ENCODE measurements at regions of chr9 and their contacts with region 1.

Region 1: DNA sequence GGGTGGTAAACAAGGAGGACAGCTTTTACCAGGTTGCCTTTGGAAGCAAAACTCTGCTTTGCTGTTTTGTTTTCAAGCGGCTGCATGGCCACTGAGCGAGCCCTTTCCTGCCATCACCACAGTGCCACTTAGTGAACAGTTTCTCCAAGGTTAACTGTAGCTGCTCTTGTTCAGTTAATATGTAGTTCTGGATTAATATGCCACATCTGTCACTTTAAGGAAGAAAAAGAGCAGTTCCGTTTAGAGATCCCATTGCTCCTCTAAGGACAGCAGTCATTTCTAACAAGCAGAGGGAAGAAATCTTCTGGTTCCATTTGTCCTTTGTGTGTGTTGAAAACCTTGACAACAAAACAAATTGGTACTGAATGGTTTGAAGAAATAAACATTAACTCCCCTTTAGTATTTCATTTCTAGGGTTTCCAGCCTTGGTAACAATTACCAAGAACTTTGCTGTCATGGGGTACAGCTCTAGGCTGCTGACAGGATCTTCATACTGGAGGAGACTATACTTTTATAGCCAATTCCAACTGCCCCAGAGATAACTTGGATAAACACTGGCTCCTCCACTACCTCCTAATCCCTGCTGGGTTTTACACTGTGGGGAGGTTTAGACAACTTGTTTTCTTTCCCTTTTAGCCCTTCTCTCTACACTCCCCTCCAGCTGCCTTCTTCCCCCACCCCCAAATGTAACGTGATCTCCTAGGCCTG is 10.3 kb upstream of the ABL1 start:
- DNase-seq: peak in 1 of 7 donors; percentile 34
- H3K4me3 ChIP-seq: no peak overlapping the region
- H3K27ac ChIP-seq: peak overlapping the region in 2 of 5 donors; percentile 55 to 57
- H3K4me1 ChIP-seq: peaks cover 18 to 23% of the 10 kb centered on the region in 2 donors
- H3K27me3 ChIP-seq: no peaks in the 10 kb centered on the region
- CTCF ChIP-seq: no peak
- POLR2A ChIP-seq: no peak

Region 2: GRCh38 chr9:130794923-130795495 is 29.8 kb before region 1 on chr9:
- intact Hi-C with region 1: loop called in 1 of 2 experiments (anchors 5 kb)
- DNase-seq: no peak
- H3K4me3 ChIP-seq: no peak overlapping the region
- H3K27ac ChIP-seq: peak overlapping the region in 3 of 5 donors; percentile 14 to 70 (median 53)
- H3K4me1 ChIP-seq: peaks cover 0 to 21% of the 10 kb centered on the region in 2 donors
- H3K27me3 ChIP-seq: no peaks in the 10 kb centered on the region
- CTCF ChIP-seq: no peak
- POLR2A ChIP-seq: no peak

Region 3: DNA sequence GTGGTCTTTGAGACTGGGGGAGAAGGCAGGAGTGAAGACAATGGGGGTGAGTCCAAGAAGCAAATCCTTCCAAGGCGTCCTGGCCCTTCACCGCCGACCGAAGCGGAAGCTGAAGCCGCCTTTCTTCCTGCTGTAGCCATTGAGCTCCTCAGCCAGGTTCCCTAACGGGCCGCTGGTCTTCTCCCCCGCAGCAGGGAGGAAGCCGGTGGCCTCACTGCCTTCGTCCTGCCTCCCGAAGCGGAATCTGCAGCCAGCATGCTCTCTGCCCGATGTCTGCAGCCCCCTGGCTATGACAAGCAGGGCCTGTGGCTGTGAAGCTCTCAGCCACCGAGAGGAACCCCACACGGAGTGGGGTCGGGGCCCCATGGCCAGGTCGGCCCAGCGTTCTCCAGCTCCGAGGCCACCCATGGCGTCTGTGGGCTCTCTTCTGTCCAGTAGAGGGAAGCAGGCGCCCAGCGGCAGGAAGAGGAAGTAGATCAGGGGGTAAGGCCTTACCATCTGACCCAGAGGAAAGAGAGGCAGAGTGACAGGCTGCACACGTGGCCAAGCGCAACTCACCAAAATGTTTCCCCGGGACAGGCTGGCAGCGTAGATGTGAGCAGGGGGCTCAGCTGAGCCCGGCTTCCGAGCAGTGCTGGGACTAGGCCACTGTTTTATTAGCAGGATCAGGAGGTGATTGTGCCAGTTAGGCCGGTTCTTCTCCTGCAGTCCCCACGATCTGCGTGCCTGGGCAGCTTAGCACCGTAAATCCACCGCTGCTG is 68.7 kb after region 1 on chr9:
- intact Hi-C with region 1: no loop called
- DNase-seq: peak in 5 of 7 donors; percentile 33 to 61 (median 45)
- H3K4me3 ChIP-seq: peak overlapping the region in 1 of 4 donors; percentile 26
- H3K27ac ChIP-seq: peak overlapping the region in 2 of 5 donors; percentile 34 to 41
- H3K4me1 ChIP-seq: no peaks in the 10 kb centered on the region
- H3K27me3 ChIP-seq: no peaks in the 10 kb centered on the region
- CTCF ChIP-seq: peak in 5 of 6 experiments; percentile 26 to 44 (median 38)
- POLR2A ChIP-seq: no peak